ENCODE measurements at regions of chr17 and their contacts with region 1.

Region 1: GRCh38 chr17:44308320-44308818 is at the start of gene RUNDC3A:
- DNase-seq: peak; percentile 36
- ATAC-seq: peak; percentile 94
- H3K4me3 ChIP-seq: peak within 1 kb of the TSS; percentile 28 to 34; a peak in 2 of 4 replicates
- H3K27ac ChIP-seq: no peak within 1 kb of the TSS
- H3K4me1 ChIP-seq: peaks cover 3 to 28% of the 10 kb centered on the region in 2 experiments; a peak in 3 of 4 replicates
- H3K27me3 ChIP-seq: no peaks in the 10 kb centered on the region
- CTCF ChIP-seq: no peak
- POLR2A ChIP-seq: no peak
- RAD21 ChIP-seq: no peak
- total RNA-seq, gene RUNDC3A: 0.61 TPM

Region 2: DNA sequence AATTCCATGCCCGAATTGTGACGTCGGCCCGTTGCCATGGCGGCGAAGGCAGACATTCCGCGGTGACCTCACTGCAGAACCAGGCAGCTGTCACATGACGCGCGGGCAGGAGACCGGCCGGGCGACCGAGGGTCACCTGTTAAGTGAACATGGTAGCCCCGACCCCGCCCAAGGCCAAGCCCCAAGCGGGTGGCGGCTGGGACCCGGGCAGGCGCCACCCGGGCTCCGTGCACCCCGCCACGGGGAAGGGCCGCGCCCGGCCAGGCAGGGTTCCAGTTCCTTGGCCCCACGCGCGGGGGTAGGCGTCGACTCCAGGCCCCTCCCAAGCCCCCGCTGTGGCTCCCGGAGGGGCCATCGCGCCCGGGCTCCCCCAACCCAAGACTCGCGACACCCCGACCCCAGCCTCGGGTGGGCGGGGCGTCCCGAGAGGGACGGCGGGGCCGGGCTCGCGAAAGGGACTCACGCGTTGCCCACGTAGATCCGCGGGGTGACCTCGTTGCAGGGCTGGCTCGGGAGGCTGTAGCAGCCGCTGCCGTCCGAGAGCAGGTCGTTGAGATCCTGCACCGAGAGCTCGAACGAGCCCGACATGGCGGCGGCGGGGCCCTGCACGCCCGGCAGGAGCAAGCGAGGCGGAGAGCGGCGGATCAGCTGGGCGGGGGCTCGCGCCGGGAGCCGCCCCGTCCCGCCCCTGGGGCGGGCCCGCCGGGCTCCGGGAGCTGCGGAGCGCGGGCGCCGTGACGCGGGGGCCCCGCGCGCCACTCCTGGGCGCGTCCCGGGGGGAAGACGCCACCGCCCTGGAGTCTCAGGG is 529.8 kb before region 1 on chr17 and contains the start of gene DUSP3:
- CTCF ChIA-PET with region 1: no interaction called
- POLR2A ChIA-PET with region 1: no interaction called
- RAD21 ChIA-PET with region 1: no interaction called
- intact Hi-C with region 1: no loop called
- DNase-seq: peak; percentile 81
- ATAC-seq: peak; percentile 90
- H3K4me3 ChIP-seq: peak within 1 kb of the TSS; percentile 78 to 81
- H3K27ac ChIP-seq: peak within 1 kb of the TSS; percentile 87
- H3K4me1 ChIP-seq: peaks cover 7 to 13% of the 10 kb centered on the region in 2 experiments; a peak in 3 of 4 replicates
- H3K27me3 ChIP-seq: no peaks in the 10 kb centered on the region
- CTCF ChIP-seq: no peak
- POLR2A ChIP-seq: peak; percentile 63
- RAD21 ChIP-seq: no peak
- total RNA-seq, gene DUSP3: 29.6 TPM

Region 3: GRCh38 chr17:44235583-44235936 is 72.8 kb before region 1 on chr17:
- CTCF ChIA-PET with region 1: no interaction called
- POLR2A ChIA-PET with region 1: no interaction called
- RAD21 ChIA-PET with region 1: no interaction called
- intact Hi-C with region 1: loop called (anchors 2 kb)
- DNase-seq: peak; percentile 73
- ATAC-seq: peak; percentile 88
- H3K4me3 ChIP-seq: peak overlapping the region in 1 of 2 experiments; percentile 21; a peak in 2 of 4 replicates
- H3K27ac ChIP-seq: peak overlapping the region; percentile 50
- H3K4me1 ChIP-seq: peaks cover 19 to 30% of the 10 kb centered on the region in 2 experiments
- H3K27me3 ChIP-seq: no peaks in the 10 kb centered on the region
- CTCF ChIP-seq: no peak
- POLR2A ChIP-seq: no peak
- RAD21 ChIP-seq: no peak